Activated CD4-positive, alpha-beta memory T cell treated with anti-CD3 and anti-CD28 coated beads for 36 hours (primary cell): ENCODE measurements at regions of chr21 and their contacts with region 1.

Region 1: DNA sequence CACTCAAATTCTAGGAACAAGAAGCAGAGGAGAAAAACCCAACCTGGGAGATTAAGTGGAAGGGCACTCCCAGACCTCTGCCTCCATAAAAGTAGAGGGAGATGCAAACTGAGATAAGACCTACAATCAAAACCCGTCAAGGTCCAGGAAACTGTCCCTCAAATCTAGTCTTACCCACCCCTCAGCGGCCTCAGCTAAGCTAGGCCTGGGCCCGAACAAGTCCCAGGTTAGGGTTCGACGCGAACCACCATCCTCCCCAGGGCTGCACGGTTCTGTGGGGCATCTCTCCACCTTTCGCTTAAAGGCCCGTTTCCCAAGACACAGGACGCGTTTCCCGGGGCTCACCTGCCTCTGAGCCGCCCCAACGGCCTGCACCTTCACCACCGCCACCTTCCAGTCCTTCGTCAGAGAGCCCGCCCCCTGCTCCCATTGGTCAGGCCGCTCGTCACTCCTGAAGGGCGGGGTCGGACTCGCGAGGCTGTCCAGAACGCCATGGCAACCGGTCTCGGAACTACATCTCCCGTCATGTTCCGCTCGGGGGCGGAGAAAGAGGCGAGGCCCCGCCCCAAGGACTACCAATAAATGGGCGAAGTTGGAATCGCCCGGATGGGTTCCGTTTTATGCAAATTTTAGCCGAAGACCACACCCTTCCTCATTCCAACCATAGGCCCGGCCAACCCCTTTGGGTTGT is at the start of gene CRYZL1:
- DNase-seq: peak; percentile 100
- H3K4me3 Mint-ChIP-seq: peak within 1 kb of the TSS; percentile 86
- H3K27ac Mint-ChIP-seq: peak within 1 kb of the TSS; percentile 93
- H3K4me1 Mint-ChIP-seq: peaks cover 24% of the 10 kb centered on the region
- H3K27me3 Mint-ChIP-seq: peaks cover 16% of the 10 kb centered on the region
- total RNA-seq, gene CRYZL1: 32.8 to 34.9 TPM

Region 2: GRCh38 chr21:33491373-33492102 is 149.9 kb before region 1 on chr21 and contains the start of gene DNAJC28:
- CTCF ChIA-PET with region 1: no interaction called
- POLR2A ChIA-PET with region 1: no interaction called
- intact Hi-C with region 1: loop called (anchors 1 kb)
- DNase-seq: peak; percentile 95
- H3K4me3 Mint-ChIP-seq: peak within 1 kb of the TSS; percentile 85
- H3K27ac Mint-ChIP-seq: peak within 1 kb of the TSS; percentile 81
- H3K4me1 Mint-ChIP-seq: peaks cover 9% of the 10 kb centered on the region
- H3K27me3 Mint-ChIP-seq: no peaks in the 10 kb centered on the region
- total RNA-seq, gene DNAJC28: 0.67 to 0.75 TPM

Region 3: DNA sequence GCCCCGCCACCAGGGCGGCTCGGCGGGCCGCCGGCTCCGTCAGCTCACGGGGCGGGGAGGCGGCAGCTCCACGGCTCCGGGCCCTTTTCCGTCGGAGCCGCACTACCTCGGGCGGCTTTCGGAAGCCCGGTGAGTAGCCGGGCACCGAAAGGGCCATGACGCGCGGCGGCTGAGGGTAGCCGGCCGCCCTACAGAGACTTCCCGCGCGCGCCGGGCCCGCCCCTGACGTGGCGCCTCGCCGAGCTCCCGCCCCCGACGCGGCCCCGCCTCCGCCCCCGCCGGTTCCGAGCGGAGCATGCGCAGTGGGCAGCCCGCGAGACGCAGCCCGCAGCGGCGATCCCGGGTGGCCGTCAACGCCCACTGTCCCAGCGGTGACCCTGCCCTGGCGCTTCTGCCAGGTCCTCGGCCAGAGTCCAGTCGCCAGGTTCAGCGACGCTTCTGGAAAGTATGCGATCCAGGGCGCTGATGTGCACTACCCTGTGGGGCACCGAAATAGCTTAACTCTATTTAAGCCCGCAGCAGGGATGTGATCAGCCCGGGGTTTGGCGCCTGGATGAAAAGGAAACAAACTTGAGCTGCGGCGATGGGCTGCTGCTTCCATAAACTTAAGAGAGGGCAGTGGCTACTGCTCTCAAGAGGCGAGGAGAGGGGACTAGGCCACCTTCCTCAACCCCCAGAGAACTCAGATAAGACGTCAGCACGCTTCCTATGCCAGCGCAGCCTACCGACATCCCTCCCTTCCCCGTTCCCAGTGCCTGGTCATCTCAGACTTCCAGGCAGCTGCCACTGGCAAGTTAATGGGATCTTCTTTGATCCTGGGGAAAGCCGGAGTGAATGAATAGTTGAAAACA is 52.8 kb before region 1 on chr21 and contains the start of gene DONSON:
- CTCF ChIA-PET with region 1: no interaction called
- POLR2A ChIA-PET with region 1: interaction called, 3 read pairs
- intact Hi-C with region 1: loop called (anchors 1 kb)
- DNase-seq: peak; percentile 90
- H3K4me3 Mint-ChIP-seq: peak within 1 kb of the TSS; percentile 92
- H3K27ac Mint-ChIP-seq: peak within 1 kb of the TSS; percentile 72
- H3K4me1 Mint-ChIP-seq: peaks cover 21% of the 10 kb centered on the region
- H3K27me3 Mint-ChIP-seq: no peaks in the 10 kb centered on the region
- total RNA-seq, gene DONSON: 38.2 to 39.0 TPM

Region 4: GRCh38 chr21:33703750-33704606 is 62.5 kb after region 1 on chr21:
- CTCF ChIA-PET with region 1: no interaction called
- POLR2A ChIA-PET with region 1: no interaction called
- intact Hi-C with region 1: no loop called
- DNase-seq: no peak
- H3K4me3 Mint-ChIP-seq: no peak overlapping the region
- H3K27ac Mint-ChIP-seq: no peak overlapping the region
- H3K4me1 Mint-ChIP-seq: no peaks in the 10 kb centered on the region
- H3K27me3 Mint-ChIP-seq: no peaks in the 10 kb centered on the region

Region 5: GRCh38 chr21:33915368-33916199 is 274.1 kb after region 1 on chr21 and contains the start of gene ATP5PO:
- CTCF ChIA-PET with region 1: no interaction called
- POLR2A ChIA-PET with region 1: no interaction called
- intact Hi-C with region 1: loop called (anchors 1 kb)
- DNase-seq: peak; percentile 98
- H3K4me3 Mint-ChIP-seq: peak within 1 kb of the TSS; percentile 99
- H3K27ac Mint-ChIP-seq: peak within 1 kb of the TSS; percentile 93
- H3K4me1 Mint-ChIP-seq: peaks cover 28% of the 10 kb centered on the region
- H3K27me3 Mint-ChIP-seq: no peaks in the 10 kb centered on the region
- total RNA-seq, gene ATP5PO: 208 to 210 TPM